Endothelial cell of umbilical vein (primary cell): ENCODE measurements at regions of chr19 and their contacts with region 1.

Region 1: DNA sequence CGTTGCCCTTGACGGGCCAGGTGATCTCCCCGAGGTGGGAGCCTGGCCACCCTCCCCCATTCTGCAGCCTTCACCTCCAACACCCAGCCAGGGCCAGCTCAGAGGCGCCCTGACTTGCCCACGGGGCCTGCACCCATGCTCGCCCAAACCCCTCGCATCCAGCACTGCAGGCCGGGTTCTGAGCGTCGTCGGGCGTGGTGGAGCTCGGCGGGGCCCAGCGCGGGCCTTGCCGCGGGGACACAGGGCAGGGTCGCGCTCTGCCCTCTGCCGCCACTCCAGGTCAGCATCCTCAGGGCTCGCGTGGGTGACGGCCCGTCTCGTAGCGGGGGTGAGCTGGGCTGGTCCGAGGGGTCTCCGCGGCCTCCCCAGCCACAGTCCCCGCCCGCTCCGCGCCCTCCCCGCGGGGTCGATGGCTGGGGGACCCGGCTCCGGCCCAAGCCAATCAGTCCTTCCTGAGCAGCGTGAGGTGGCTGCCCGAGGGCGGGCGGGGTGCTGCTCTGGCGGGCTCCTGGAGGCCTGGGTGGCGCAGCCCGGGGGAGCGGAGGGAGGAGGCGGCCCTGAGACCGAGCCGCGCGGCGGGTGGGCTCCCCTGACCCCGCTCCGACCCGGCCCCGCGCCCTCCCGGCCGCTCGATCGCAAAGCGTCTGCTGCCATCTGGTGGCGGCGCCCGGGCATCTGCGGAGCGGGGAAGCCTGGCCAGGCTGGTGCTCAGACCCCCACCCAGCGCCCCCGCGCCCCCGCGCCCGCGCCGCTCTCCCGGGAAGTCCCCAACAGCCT is 61.4 kb downstream of the CCNE1 start:
- DNase-seq: no peak
- H3K4me3 ChIP-seq: peak overlapping the region in 1 of 3 experiments; percentile 23
- H3K27ac ChIP-seq: no peak overlapping the region
- H3K4me1 ChIP-seq: peaks cover 4% of the 10 kb centered on the region
- H3K27me3 ChIP-seq: no peaks in the 10 kb centered on the region
- CTCF ChIP-seq: peak; percentile 70 to 77
- POLR2A ChIP-seq: no peak

Region 2: GRCh38 chr19:29735800-29736199 is 137.4 kb before region 1 on chr19:
- CTCF ChIA-PET with region 1: interaction called, 28 read pairs
- POLR2A ChIA-PET with region 1: no interaction called
- dilution Hi-C with region 1: no loop called
- intact Hi-C with region 1: loop called (anchors 1 kb)
- DNase-seq: no peak
- H3K4me3 ChIP-seq: no peak overlapping the region
- H3K27ac ChIP-seq: no peak overlapping the region
- H3K4me1 ChIP-seq: no peaks in the 10 kb centered on the region
- H3K27me3 ChIP-seq: no peaks in the 10 kb centered on the region
- CTCF ChIP-seq: no peak
- POLR2A ChIP-seq: no peak

Region 3: GRCh38 chr19:29771708-29772414 is 101.4 kb before region 1 on chr19:
- CTCF ChIA-PET with region 1: interaction called, 40 read pairs
- POLR2A ChIA-PET with region 1: no interaction called
- dilution Hi-C with region 1: no loop called
- intact Hi-C with region 1: loop called (anchors 1 kb)
- DNase-seq: peak; percentile 38
- H3K4me3 ChIP-seq: no peak overlapping the region
- H3K27ac ChIP-seq: no peak overlapping the region
- H3K4me1 ChIP-seq: no peaks in the 10 kb centered on the region
- H3K27me3 ChIP-seq: no peaks in the 10 kb centered on the region
- CTCF ChIP-seq: peak; percentile 57 to 82
- POLR2A ChIP-seq: no peak